ENCODE measurements at regions of chr12 and their contacts with region 1.

Region 1: GRCh38 chr12:97167598-97167997 is 260.5 kb downstream of the NEDD1 start:
- DNase-seq: no peak
- H3K4me3 ChIP-seq: no peak overlapping the region
- H3K27ac ChIP-seq: no peak overlapping the region
- H3K4me1 ChIP-seq: no peaks in the 10 kb centered on the region
- H3K27me3 ChIP-seq: no peaks in the 10 kb centered on the region
- CTCF ChIP-seq: no peak
- EP300 ChIP-seq: no peak
- POLR2A ChIP-seq: no peak
- RAD21 ChIP-seq: no peak

Region 2: DNA sequence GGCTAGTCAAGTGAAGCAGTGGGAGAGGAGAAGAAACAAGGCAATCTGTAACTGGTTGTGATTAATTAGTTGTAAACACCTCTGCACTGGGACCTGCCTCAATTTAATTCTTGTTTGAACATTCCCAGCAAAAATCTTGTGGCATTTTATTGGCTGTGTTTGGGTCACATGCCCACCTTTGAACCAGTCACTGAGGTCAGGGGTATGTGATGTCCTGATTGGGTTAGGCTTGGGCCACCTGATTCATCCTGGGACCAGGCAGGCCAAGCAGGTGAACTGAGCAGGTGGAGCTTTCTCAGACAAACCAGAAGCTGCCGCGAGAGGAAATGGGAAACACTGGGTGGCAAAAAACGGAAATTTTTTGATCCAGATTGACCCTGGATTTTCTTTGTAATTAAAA is 188.1 kb before region 1 on chr12:
- CTCF ChIA-PET with region 1: no interaction called
- POLR2A ChIA-PET with region 1: no interaction called
- DNase-seq: no peak
- H3K4me3 ChIP-seq: no peak overlapping the region
- H3K27ac ChIP-seq: no peak overlapping the region
- H3K4me1 ChIP-seq: peaks cover 0 to 3% (median 0%) of the 10 kb centered on the region in 4 experiments; a peak in 3 of 7 replicates
- H3K27me3 ChIP-seq: no peaks in the 10 kb centered on the region
- CTCF ChIP-seq: no peak
- EP300 ChIP-seq: no peak
- POLR2A ChIP-seq: no peak
- RAD21 ChIP-seq: no peak

Region 3: GRCh38 chr12:97148941-97149559 is 18.5 kb before region 1 on chr12:
- CTCF ChIA-PET with region 1: interaction called, 14 read pairs
- POLR2A ChIA-PET with region 1: interaction called, 6 read pairs
- DNase-seq: peak; percentile 49 to 88
- H3K4me3 ChIP-seq: no peak overlapping the region
- H3K27ac ChIP-seq: no peak overlapping the region
- H3K4me1 ChIP-seq: no peaks in the 10 kb centered on the region; a peak in 1 of 7 replicates
- H3K27me3 ChIP-seq: no peaks in the 10 kb centered on the region
- CTCF ChIP-seq: peak; percentile 93 to 97 (median 97)
- EP300 ChIP-seq: no peak
- POLR2A ChIP-seq: no peak
- RAD21 ChIP-seq: peak; percentile 96

Region 4: GRCh38 chr12:97359021-97359690 is 191.6 kb after region 1 on chr12:
- CTCF ChIA-PET with region 1: no interaction called
- POLR2A ChIA-PET with region 1: no interaction called
- DNase-seq: no peak
- H3K4me3 ChIP-seq: no peak overlapping the region
- H3K27ac ChIP-seq: no peak overlapping the region
- H3K4me1 ChIP-seq: no peaks in the 10 kb centered on the region
- H3K27me3 ChIP-seq: no peaks in the 10 kb centered on the region
- CTCF ChIP-seq: no peak
- EP300 ChIP-seq: no peak
- POLR2A ChIP-seq: no peak
- RAD21 ChIP-seq: no peak; a peak in 1 of 4 replicates

Measured in H1 (cell line).